CD8-positive, alpha-beta T cell (primary cell): ENCODE measurements at regions of chrX and their contacts with region 1.

Region 1: DNA sequence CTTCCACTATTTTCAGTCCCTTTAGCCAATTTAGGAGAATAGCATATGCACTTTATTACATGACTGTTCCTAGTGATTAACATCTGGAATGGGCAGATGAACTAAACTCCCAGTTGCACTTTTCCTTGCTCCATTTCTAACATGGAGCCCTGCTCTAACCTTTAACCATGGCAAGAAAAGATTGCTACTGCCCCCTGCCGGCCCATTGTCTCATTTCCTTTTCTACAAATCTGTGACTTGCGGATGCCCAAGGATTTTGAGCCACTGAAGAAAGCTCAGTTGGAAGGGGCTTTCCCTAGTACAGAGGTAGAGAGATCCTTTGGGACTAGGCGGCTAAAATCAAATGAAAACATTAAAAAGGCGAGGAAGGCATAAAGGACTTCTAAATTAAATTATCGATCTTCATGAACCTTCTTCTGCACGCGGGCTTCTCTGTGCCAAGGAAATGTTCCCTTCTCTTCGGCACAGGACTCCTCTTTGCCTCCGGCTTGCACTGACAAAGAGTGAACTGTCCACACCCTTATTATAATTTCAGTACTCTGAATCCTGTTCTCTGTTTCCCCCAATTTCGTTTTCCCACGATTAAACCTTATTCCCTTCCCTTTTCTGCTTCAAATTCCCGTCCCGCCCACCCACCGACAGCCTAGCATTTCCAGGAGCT is 577 bp upstream of the GLRA2 start:
- DNase-seq: peak in 8 of 9 experiments; percentile 0 to 50 (median 30)
- ATAC-seq: no peak
- H3K4me3 ChIP-seq: no peak overlapping the region
- H3K4me3 Mint-ChIP-seq: no peak overlapping the region
- H3K27ac ChIP-seq: no peak overlapping the region
- H3K27ac Mint-ChIP-seq: no peak overlapping the region
- H3K4me1 ChIP-seq: no peaks in the 10 kb centered on the region
- H3K4me1 Mint-ChIP-seq: no peaks in the 10 kb centered on the region
- H3K27me3 ChIP-seq: no peaks in the 10 kb centered on the region
- H3K27me3 Mint-ChIP-seq: no peaks in the 10 kb centered on the region
- CTCF ChIP-seq: no peak

Region 2: GRCh38 chrX:14039344-14039743 is 489.4 kb before region 1 on chrX:
- CTCF ChIA-PET with region 1: no interaction called
- POLR2A ChIA-PET with region 1: no interaction called
- intact Hi-C with region 1: loop called in 1 of 2 experiments (anchors 10 kb)
- DNase-seq: peak; percentile 5 to 74 (median 57)
- ATAC-seq: peak; percentile 82
- H3K4me3 ChIP-seq: no peak overlapping the region
- H3K4me3 Mint-ChIP-seq: no peak overlapping the region
- H3K27ac ChIP-seq: no peak overlapping the region
- H3K27ac Mint-ChIP-seq: no peak overlapping the region
- H3K4me1 ChIP-seq: no peaks in the 10 kb centered on the region
- H3K4me1 Mint-ChIP-seq: no peaks in the 10 kb centered on the region
- H3K27me3 ChIP-seq: no peaks in the 10 kb centered on the region
- H3K27me3 Mint-ChIP-seq: no peaks in the 10 kb centered on the region
- CTCF ChIP-seq: peak; percentile 64

Region 3: DNA sequence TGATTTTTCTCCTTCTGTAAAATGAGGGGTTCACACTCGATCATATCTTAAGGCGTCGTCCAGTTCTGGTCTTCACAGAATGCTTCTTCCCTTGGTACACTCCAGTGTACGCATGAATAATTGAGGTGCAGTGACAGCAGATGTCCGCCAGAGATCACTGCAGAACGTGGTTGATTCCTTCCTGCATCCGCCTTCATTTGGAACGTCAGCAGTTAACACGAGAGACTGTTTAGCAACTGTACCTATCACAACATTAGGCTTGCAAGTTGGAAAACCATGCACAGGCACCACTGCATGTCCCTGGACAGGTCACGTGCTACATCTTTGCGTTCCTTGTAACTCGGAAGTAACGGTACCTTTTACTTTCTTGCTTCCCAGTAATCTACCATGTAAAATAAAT is 433.1 kb before region 1 on chrX:
- CTCF ChIA-PET with region 1: no interaction called
- POLR2A ChIA-PET with region 1: no interaction called
- intact Hi-C with region 1: loop called (anchors 5 to 10 kb)
- DNase-seq: peak in 8 of 9 experiments; percentile 1 to 57 (median 20)
- ATAC-seq: peak; percentile 55
- H3K4me3 ChIP-seq: no peak overlapping the region
- H3K4me3 Mint-ChIP-seq: peak overlapping the region; percentile 12
- H3K27ac ChIP-seq: no peak overlapping the region
- H3K27ac Mint-ChIP-seq: no peak overlapping the region
- H3K4me1 ChIP-seq: no peaks in the 10 kb centered on the region
- H3K4me1 Mint-ChIP-seq: peaks cover 2% of the 10 kb centered on the region
- H3K27me3 ChIP-seq: no peaks in the 10 kb centered on the region
- H3K27me3 Mint-ChIP-seq: no peaks in the 10 kb centered on the region
- CTCF ChIP-seq: peak; percentile 42